ENCODE measurements at regions of chr2 and their contacts with region 1.

Region 1: DNA sequence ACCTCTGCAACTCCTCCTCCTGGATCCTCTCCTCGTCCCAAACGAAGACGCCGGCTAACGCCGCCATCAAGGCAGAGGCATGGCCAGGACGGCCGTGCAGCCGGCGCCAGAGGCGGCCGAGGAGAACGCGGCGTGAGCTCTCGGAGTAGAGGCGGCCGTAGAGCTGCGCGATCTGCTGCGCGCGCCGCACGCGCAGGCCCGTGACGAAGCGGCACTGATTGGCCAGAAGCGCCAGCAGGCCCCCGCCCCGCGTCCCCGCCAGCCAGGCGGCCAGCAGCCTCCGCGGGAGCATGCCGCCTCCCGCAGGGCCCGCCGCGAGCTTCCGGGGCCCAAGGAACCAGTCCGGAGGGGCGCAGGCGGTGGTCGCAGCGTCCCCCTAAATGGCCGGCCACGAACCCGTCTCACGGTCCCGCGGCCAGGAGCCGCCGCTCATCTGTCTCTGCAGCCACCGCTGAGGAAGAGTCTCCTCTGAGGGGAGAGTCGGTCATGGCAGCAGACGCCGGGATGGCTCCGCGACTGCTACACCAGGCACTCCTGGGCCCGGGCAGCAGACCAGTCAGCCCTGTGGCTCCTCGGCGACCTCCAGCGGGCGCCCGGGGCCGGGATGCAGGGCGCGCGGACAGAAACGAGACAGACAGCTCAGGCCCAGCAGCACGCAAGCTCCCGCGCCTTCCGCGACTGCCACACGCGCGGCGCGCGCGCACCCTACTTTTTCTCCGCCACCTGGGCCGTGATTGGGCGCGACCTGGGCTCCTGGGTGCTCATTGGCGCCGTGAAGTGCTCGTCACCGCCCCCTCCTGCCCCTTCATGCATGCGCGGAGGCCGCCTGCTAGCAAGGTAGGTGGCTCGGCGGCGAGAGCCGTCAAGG is at the start of gene STARD7:
- DNase-seq: peak; percentile 100
- total RNA-seq, gene STARD7: 68.0 to 71.4 TPM

Region 2: GRCh38 chr2:96251721-96252292 is 43.4 kb after region 1 on chr2:
- intact Hi-C with region 1: loop called in 1 of 2 experiments (anchors 5 kb)
- DNase-seq: peak; percentile 92

Region 3: GRCh38 chr2:96265840-96266679 is 57.7 kb after region 1 on chr2 and contains the starts of genes CIAO1 and TMEM127:
- intact Hi-C with region 1: loop called in 1 of 2 experiments (anchors 10 kb)
- DNase-seq: peak; percentile 100
- total RNA-seq, gene CIAO1: 41.9 to 46.4 TPM
- total RNA-seq, gene TMEM127: 49.2 to 52.4 TPM